A673 (cell line): ENCODE measurements at regions of chr3 and their contacts with region 1.

Region 1: GRCh38 chr3:132840201-132840700 is 118.0 kb upstream of the NPHP3 start:
- DNase-seq: no peak
- H3K4me3 ChIP-seq: no peak overlapping the region
- H3K27ac ChIP-seq: no peak overlapping the region
- H3K4me1 ChIP-seq: no peaks in the 10 kb centered on the region
- H3K27me3 ChIP-seq: peaks cover 8% of the 10 kb centered on the region
- CTCF ChIP-seq: no peak

Region 2: DNA sequence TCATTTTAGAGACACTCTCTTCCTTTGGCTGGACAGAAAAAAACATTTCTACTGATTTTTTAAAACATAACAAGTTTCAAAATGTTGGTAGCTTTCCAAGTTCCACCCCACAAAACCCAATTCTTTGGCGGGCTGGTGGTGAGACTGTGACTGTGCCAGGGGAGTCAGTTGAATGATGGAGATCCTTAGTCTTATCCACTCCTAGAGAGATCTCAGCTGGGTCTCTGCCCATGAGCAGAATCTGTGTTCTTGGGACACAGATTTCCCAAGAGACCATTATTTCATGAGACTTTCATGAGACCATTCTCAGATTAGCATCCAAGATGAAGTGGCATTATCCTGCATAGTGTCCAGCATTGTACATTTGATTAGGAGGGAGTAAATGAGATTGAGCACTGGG is 17.1 kb after region 1 on chr3:
- CTCF ChIA-PET with region 1: no interaction called
- POLR2A ChIA-PET with region 1: interaction called, 12 read pairs
- intact Hi-C with region 1: no loop called
- DNase-seq: no peak
- H3K4me3 ChIP-seq: no peak overlapping the region
- H3K27ac ChIP-seq: no peak overlapping the region
- H3K4me1 ChIP-seq: no peaks in the 10 kb centered on the region
- H3K27me3 ChIP-seq: no peaks in the 10 kb centered on the region
- CTCF ChIP-seq: no peak